PC-3 (cell line): ENCODE measurements at regions of chr7 and their contacts with region 1.

Region 1: GRCh38 chr7:131388126-131388525 is 60.5 kb downstream of the MKLN1 start:
- DNase-seq: no peak
- ATAC-seq: no peak
- H3K4me3 ChIP-seq: no peak overlapping the region
- H3K27ac ChIP-seq: no peak overlapping the region
- H3K4me1 ChIP-seq: peaks cover 20% of the 10 kb centered on the region
- H3K27me3 ChIP-seq: no peaks in the 10 kb centered on the region
- CTCF ChIP-seq: no peak

Region 2: DNA sequence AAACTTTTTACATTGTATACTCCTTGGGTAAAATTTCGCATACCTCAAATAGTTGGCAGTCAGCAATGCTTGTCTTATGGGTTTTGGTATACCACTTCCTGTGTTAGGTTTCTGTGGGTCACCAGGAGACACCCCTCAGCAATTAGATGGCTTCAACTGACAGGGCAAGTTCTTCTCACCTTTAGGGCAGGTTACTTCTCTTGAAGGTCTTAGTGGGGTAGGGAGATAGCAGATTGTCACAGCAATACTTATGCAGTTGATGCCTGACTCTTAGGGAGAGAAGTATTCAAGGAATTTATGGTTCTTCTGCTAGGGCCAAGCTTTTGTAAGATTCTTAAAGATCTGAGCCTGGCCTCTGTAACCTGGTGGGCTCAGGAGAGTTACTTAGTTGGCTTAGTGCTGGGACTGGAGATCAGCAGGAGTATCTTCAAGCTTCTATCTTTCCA is 17.6 kb before region 1 on chr7:
- CTCF ChIA-PET with region 1: no interaction called
- POLR2A ChIA-PET with region 1: no interaction called
- intact Hi-C with region 1: loop called (anchors 2 kb)
- DNase-seq: peak; percentile 62
- ATAC-seq: peak; percentile 81
- H3K4me3 ChIP-seq: no peak overlapping the region
- H3K27ac ChIP-seq: no peak overlapping the region
- H3K4me1 ChIP-seq: peaks cover 25% of the 10 kb centered on the region
- H3K27me3 ChIP-seq: no peaks in the 10 kb centered on the region
- CTCF ChIP-seq: no peak

Region 3: DNA sequence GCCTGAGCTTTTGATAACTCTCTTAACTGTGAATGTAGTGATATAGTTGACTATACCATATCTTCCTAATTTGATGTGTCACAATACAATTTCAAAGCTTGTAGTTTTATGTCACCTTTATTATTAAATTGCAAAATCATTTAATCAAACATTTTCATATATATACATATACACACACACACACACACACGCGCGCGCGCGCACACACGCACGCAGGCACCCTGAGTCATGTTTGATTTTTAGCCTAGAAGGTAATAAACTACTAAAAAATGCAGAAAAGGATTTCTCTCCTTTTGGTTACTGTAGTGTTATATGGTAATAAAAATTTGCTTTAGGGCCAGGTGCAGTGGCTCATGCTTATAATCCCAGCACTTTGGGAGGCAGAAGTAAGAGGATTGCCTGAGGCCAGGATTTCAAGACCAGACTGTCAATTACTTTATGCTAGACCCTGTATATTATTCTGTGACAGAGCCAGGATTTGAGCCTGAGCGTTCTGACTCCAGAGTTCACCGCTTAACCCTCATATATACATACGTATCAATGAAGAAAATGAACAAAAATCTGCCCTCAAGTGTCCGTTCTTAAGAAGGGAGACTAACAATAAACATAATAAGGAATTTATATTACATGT is 78.7 kb after region 1 on chr7:
- CTCF ChIA-PET with region 1: no interaction called
- POLR2A ChIA-PET with region 1: no interaction called
- intact Hi-C with region 1: no loop called
- DNase-seq: no peak
- ATAC-seq: no peak
- H3K4me3 ChIP-seq: no peak overlapping the region
- H3K27ac ChIP-seq: no peak overlapping the region
- H3K4me1 ChIP-seq: no peaks in the 10 kb centered on the region
- H3K27me3 ChIP-seq: no peaks in the 10 kb centered on the region
- CTCF ChIP-seq: no peak